Endothelial cell of umbilical vein (primary cell): ENCODE measurements at regions of chr16 and their contacts with region 1.

Region 1: DNA sequence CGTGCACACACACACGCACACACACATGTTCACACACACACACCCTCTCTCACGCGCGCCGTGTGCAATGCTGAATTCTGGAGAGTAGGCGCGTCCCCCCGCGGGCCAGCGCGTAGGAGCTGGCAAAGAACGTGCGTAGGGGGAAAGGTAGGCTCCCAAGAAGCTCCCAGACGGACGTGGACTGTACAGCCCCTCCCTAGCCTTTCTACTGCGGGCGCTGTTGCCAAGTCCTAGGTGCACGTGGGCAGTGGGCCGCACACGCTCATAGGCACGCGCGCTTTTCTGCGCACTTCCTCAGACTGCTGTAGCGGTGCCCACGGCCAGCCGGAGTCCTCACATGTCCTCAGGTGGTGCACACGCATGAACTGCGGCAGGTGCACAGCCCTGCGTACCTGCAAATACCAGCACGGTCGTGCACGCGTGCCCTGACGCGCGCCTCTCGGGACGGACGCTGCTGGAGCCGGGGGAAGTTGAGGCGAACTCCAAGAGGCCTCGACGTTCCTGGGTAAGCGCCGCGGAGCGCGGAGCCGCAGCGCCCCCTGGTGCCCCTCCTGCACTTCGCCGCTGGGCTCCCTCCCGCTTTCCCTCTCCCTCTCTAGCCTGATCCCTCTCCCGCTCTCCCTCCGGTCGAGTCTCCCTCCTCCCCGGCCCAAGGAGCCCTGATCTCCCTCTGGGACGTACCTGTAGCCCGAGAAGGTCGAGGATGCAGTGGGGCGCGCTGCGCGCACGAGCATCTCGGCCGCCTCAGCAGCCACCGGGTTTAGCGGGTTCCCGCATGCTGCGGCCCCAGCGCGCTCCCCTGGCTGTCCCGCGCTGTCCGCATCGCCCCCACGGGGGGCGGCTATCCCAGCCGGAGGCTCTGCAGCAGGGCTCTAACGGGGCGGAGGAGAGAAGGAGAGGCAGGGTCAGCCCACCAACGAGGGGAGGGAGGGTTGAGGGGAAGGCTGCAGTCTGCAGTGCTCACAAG is 749 bp downstream of the GRIN2A start:
- DNase-seq: peak; percentile 35
- H3K4me3 ChIP-seq: no peak overlapping the region
- H3K27ac ChIP-seq: no peak overlapping the region
- H3K4me1 ChIP-seq: no peaks in the 10 kb centered on the region
- H3K27me3 ChIP-seq: peaks cover 10 to 14% of the 10 kb centered on the region in 2 experiments
- CTCF ChIP-seq: peak; percentile 71 to 94
- POLR2A ChIP-seq: no peak

Region 2: DNA sequence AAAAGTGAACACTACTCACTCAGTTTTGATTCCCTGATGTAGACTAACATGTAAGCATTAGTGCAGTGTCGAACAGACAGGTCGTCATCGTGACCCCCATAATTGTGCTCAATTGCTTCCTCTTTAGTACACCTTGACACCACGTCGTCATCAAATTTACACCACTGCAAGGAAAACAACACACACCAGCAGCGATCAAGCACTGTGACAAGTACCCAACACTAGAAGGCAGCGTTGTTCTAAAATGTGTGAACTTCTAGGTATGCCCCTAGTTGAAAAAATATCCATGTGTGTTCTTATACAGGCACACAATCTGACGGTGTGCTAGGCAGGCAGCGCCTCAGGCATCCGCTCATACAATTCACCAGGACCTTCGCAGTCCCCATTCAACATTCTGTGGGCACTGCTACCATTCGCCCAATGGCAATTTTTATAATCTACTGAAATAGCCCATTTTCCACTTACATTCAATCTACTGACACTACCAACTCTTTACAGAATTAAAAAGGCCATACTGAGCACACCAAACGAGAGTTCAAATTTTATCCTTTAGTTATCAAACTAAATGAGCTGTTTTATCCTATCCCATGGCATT is 1276.2 kb before region 1 on chr16:
- CTCF ChIA-PET with region 1: no interaction called
- POLR2A ChIA-PET with region 1: no interaction called
- dilution Hi-C with region 1: no loop called
- intact Hi-C with region 1: loop called (anchors 5 kb)
- DNase-seq: peak; percentile 42
- H3K4me3 ChIP-seq: no peak overlapping the region
- H3K27ac ChIP-seq: no peak overlapping the region
- H3K4me1 ChIP-seq: no peaks in the 10 kb centered on the region
- H3K27me3 ChIP-seq: no peaks in the 10 kb centered on the region
- CTCF ChIP-seq: peak; percentile 27 to 50
- POLR2A ChIP-seq: no peak

Region 3: GRCh38 chr16:9159839-9160550 is 1021.5 kb before region 1 on chr16:
- CTCF ChIA-PET with region 1: interaction called, 23 read pairs
- POLR2A ChIA-PET with region 1: no interaction called
- dilution Hi-C with region 1: no loop called
- intact Hi-C with region 1: loop called (anchors 1 kb)
- DNase-seq: peak; percentile 44
- H3K4me3 ChIP-seq: no peak overlapping the region
- H3K27ac ChIP-seq: no peak overlapping the region
- H3K4me1 ChIP-seq: no peaks in the 10 kb centered on the region
- H3K27me3 ChIP-seq: no peaks in the 10 kb centered on the region
- CTCF ChIP-seq: peak; percentile 43 to 70
- POLR2A ChIP-seq: no peak

Region 4: DNA sequence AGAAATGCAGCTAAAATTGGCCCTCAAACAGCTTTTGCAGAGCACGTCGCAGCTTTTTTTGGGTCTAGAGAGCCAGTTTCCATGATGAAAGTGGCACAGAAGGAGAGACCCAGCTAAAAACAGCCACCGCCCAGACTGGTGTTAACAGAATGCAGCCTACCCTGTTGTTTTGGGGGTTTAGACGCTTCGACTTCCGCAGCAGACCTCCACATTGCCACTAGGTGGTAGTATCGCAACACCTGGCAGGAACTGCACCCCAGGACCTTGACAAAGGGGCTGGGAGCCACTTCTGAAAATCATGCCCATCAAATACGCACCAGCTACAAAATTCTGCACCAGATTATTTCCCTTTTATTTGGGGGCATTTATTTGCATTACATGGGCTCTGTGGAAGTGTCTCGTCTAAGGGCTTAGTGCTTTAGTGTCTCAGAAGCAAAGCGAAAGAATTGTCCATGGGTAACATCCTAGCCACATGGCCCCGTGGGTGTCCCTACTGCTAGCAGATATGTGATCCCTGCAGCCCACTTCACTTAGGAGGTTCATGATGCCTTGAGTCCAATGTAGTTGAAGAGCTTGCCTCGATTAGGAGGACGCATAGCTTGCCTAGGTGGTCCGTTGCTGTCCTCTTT is 922.9 kb before region 1 on chr16:
- CTCF ChIA-PET with region 1: interaction called, 8 read pairs
- POLR2A ChIA-PET with region 1: no interaction called
- dilution Hi-C with region 1: no loop called
- intact Hi-C with region 1: loop called (anchors 1 kb)
- DNase-seq: peak; percentile 3
- H3K4me3 ChIP-seq: no peak overlapping the region
- H3K27ac ChIP-seq: no peak overlapping the region
- H3K4me1 ChIP-seq: no peaks in the 10 kb centered on the region
- H3K27me3 ChIP-seq: no peaks in the 10 kb centered on the region
- CTCF ChIP-seq: peak; percentile 46 to 51
- POLR2A ChIP-seq: no peak

Region 5: GRCh38 chr16:9297437-9298113 is 883.9 kb before region 1 on chr16:
- CTCF ChIA-PET with region 1: interaction called, 5 read pairs
- POLR2A ChIA-PET with region 1: no interaction called
- dilution Hi-C with region 1: no loop called
- intact Hi-C with region 1: loop called (anchors 1 kb)
- DNase-seq: peak; percentile 2
- H3K4me3 ChIP-seq: no peak overlapping the region
- H3K27ac ChIP-seq: no peak overlapping the region
- H3K4me1 ChIP-seq: no peaks in the 10 kb centered on the region
- H3K27me3 ChIP-seq: no peaks in the 10 kb centered on the region
- CTCF ChIP-seq: peak; percentile 55 to 58
- POLR2A ChIP-seq: no peak

Region 6: GRCh38 chr16:9647981-9648712 is 533.3 kb before region 1 on chr16:
- CTCF ChIA-PET with region 1: interaction called, 17 read pairs
- POLR2A ChIA-PET with region 1: no interaction called
- dilution Hi-C with region 1: no loop called
- intact Hi-C with region 1: loop called (anchors 2 kb)
- DNase-seq: peak; percentile 24
- H3K4me3 ChIP-seq: no peak overlapping the region
- H3K27ac ChIP-seq: no peak overlapping the region
- H3K4me1 ChIP-seq: no peaks in the 10 kb centered on the region
- H3K27me3 ChIP-seq: no peaks in the 10 kb centered on the region
- CTCF ChIP-seq: peak; percentile 40 to 43
- POLR2A ChIP-seq: no peak